ENCODE measurements at regions of chr4 and their contacts with region 1.

Region 1: GRCh38 chr4:52376132-52376704 is 282.9 kb downstream of the USP46 start:
- DNase-seq: peak in 4 of 14 experiments; percentile 24 to 49 (median 38)
- ATAC-seq: no peak
- H3K4me3 ChIP-seq: no peak overlapping the region
- H3K4me3 Mint-ChIP-seq: no peak overlapping the region
- H3K27ac ChIP-seq: no peak overlapping the region
- H3K27ac Mint-ChIP-seq: no peak overlapping the region
- H3K4me1 ChIP-seq: no peaks in the 10 kb centered on the region
- H3K4me1 Mint-ChIP-seq: no peaks in the 10 kb centered on the region
- H3K27me3 ChIP-seq: no peaks in the 10 kb centered on the region
- H3K27me3 Mint-ChIP-seq: peaks cover 39% of the 10 kb centered on the region
- CTCF ChIP-seq: peak; percentile 65

Region 2: DNA sequence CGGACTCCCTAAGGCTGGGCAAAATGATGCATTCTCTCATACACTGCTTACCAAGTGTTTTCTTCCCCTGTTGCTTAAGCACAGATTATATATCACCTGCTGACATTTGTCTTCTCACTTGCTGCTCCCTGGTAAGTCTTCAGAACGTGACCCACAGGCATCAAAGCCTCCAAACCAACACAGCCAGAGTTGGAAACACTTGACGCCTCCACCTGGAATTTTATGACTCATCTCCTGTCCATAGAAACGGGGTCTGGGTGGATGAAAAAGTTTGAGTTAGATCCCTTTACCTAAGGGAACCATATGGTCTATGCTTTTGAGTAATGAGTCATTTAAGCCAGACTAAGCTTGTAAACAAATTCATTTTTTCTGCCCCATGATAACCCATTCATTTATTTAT is 31.3 kb after region 1 on chr4:
- CTCF ChIA-PET with region 1: no interaction called
- POLR2A ChIA-PET with region 1: no interaction called
- intact Hi-C with region 1: no loop called
- DNase-seq: no peak
- ATAC-seq: no peak
- H3K4me3 ChIP-seq: no peak overlapping the region
- H3K4me3 Mint-ChIP-seq: no peak overlapping the region
- H3K27ac ChIP-seq: no peak overlapping the region
- H3K27ac Mint-ChIP-seq: no peak overlapping the region
- H3K4me1 ChIP-seq: no peaks in the 10 kb centered on the region
- H3K4me1 Mint-ChIP-seq: no peaks in the 10 kb centered on the region
- H3K27me3 ChIP-seq: peaks cover 0 to under 1% of the 10 kb centered on the region in 2 experiments
- H3K27me3 Mint-ChIP-seq: no peaks in the 10 kb centered on the region
- CTCF ChIP-seq: no peak

Region 3: GRCh38 chr4:52665592-52665991 is 289.4 kb after region 1 on chr4:
- CTCF ChIA-PET with region 1: no interaction called
- POLR2A ChIA-PET with region 1: no interaction called
- intact Hi-C with region 1: loop called in 1 of 2 experiments (anchors 5 kb)
- DNase-seq: peak in 3 of 14 experiments; percentile 31 to 42 (median 41)
- ATAC-seq: peak; percentile 37
- H3K4me3 ChIP-seq: no peak overlapping the region
- H3K4me3 Mint-ChIP-seq: no peak overlapping the region
- H3K27ac ChIP-seq: no peak overlapping the region
- H3K27ac Mint-ChIP-seq: no peak overlapping the region
- H3K4me1 ChIP-seq: peaks cover 3% of the 10 kb centered on the region
- H3K4me1 Mint-ChIP-seq: peaks cover 7% of the 10 kb centered on the region
- H3K27me3 ChIP-seq: peaks cover 0 to 2% of the 10 kb centered on the region in 2 experiments
- H3K27me3 Mint-ChIP-seq: peaks cover 53% of the 10 kb centered on the region
- CTCF ChIP-seq: no peak

Region 4: DNA sequence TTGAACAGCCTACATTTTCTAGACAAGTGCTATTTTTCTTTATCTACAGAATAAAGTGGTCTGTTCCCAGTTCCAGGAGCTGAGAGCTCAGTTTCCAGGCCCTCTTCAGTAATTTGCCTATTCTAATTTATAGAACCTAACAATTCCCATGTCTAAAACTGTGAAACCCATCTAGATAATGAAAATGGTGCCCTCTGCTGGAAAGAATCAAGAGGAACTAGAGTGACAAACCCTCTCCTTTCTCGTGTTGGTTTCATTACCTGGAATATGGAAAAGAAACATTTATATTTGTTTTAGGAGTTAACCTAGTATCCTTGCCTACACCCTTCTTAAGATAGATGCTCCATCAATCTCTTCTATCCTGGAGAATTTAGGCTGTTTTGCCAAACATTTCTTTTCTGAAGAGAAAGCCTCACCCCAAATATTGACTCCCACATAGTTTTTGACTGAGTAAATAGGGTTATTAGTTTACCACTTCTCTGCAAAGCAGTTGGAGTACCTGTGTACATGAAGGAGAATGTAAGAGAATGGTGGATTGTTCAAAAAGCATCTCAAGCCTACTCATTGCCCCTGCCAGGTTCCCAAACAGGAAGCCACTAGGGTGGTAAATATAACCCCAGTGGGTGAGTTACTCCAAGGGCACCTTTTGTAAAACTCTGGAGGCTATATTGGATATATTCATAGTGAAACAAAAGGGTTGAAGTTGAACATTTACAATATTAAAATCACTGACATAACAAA is 607.5 kb after region 1 on chr4:
- CTCF ChIA-PET with region 1: interaction called, 4 read pairs
- POLR2A ChIA-PET with region 1: no interaction called
- intact Hi-C with region 1: loop called in 1 of 2 experiments (anchors 1 kb)
- DNase-seq: peak in 3 of 14 experiments; percentile 61 to 64 (median 62)
- ATAC-seq: no peak
- H3K4me3 ChIP-seq: no peak overlapping the region
- H3K4me3 Mint-ChIP-seq: no peak overlapping the region
- H3K27ac ChIP-seq: no peak overlapping the region
- H3K27ac Mint-ChIP-seq: no peak overlapping the region
- H3K4me1 ChIP-seq: no peaks in the 10 kb centered on the region
- H3K4me1 Mint-ChIP-seq: peaks cover 4% of the 10 kb centered on the region
- H3K27me3 ChIP-seq: no peaks in the 10 kb centered on the region
- H3K27me3 Mint-ChIP-seq: no peaks in the 10 kb centered on the region
- CTCF ChIP-seq: peak; percentile 81